ENCODE measurements at regions of chr4 and their contacts with region 1.

Region 1: GRCh38 chr4:154807042-154807630 is 26.1 kb downstream of the RBM46 start:
- DNase-seq: no peak
- H3K4me3 Mint-ChIP-seq: no peak overlapping the region
- H3K27ac Mint-ChIP-seq: no peak overlapping the region
- H3K4me1 Mint-ChIP-seq: no peaks in the 10 kb centered on the region
- H3K27me3 Mint-ChIP-seq: no peaks in the 10 kb centered on the region

Region 2: DNA sequence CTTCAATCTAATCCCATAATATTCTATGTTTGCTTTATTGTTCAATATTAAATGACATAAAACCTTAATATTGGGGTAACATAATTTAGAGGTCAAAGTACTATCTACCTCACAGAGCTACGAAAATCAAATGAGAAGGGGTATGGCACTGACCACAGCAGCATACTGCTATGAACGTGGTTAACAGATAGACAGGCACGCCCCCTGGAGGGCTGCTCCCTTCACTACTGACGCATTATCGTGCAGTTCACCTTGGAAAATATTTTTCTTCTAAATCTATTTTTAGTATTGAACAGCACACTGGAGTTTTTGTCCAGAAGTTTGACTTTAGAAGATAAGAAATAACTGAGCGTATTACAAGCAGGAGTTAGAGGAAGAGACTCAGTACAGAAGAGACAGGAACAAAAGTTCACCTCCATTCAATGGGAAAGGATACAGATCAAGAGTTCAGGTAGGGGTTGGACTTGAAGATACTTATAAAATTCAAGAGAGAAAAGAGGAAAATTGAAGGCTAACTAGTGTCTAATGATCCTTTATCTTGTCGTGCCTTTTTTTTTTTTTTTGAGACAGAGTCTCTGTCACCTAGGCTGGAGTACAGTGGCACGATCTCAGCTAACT is 546.9 kb after region 1 on chr4:
- intact Hi-C with region 1: loop called (anchors 5 kb)
- DNase-seq: no peak
- H3K4me3 Mint-ChIP-seq: no peak overlapping the region
- H3K27ac Mint-ChIP-seq: no peak overlapping the region
- H3K4me1 Mint-ChIP-seq: no peaks in the 10 kb centered on the region
- H3K27me3 Mint-ChIP-seq: no peaks in the 10 kb centered on the region

Region 3: GRCh38 chr4:155371432-155372043 is 564.4 kb after region 1 on chr4:
- intact Hi-C with region 1: loop called (anchors 1 kb)
- DNase-seq: no peak
- H3K4me3 Mint-ChIP-seq: no peak overlapping the region
- H3K27ac Mint-ChIP-seq: no peak overlapping the region
- H3K4me1 Mint-ChIP-seq: peaks cover 13% of the 10 kb centered on the region
- H3K27me3 Mint-ChIP-seq: no peaks in the 10 kb centered on the region

Measured in activated T-helper 2 cell treated with anti-CD3 and anti-CD28 coated beads, Interferon-gamma antibody, Interleukin-2, Interleukin-4, amounts not matched to agents 10 μg/mL and 5 μg/mL and 100 μg/mL, durations not matched to agents 14 hours and 24 hours and 36 hours (primary cell).